ENCODE measurements at regions of chr4 and their contacts with region 1.

Region 1: DNA sequence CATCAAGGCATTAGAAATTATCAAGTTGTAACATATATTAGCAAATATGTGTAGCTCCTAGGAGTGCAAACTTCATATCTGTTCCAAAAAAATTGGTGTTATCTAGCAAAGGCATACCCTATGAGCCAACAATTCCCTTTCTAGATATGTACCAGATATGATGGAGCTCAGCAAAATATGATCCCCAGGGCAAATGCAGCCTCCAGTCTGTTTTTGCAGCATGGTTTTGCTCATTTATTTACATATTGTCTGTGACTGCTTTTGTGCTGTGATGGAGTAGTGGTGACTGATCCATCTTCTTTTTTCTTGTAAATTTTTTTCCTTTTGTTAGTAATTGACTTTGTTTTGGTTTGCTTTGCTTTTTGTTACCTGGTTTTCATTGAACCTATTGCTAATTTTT is 41.0 kb downstream of the CEP135 start:
- DNase-seq: no peak
- ATAC-seq: no peak
- H3K4me3 ChIP-seq: no peak overlapping the region
- H3K27ac ChIP-seq: no peak overlapping the region
- H3K4me1 ChIP-seq: no peaks in the 10 kb centered on the region
- H3K27me3 ChIP-seq: no peaks in the 10 kb centered on the region
- CTCF ChIP-seq: no peak

Region 2: DNA sequence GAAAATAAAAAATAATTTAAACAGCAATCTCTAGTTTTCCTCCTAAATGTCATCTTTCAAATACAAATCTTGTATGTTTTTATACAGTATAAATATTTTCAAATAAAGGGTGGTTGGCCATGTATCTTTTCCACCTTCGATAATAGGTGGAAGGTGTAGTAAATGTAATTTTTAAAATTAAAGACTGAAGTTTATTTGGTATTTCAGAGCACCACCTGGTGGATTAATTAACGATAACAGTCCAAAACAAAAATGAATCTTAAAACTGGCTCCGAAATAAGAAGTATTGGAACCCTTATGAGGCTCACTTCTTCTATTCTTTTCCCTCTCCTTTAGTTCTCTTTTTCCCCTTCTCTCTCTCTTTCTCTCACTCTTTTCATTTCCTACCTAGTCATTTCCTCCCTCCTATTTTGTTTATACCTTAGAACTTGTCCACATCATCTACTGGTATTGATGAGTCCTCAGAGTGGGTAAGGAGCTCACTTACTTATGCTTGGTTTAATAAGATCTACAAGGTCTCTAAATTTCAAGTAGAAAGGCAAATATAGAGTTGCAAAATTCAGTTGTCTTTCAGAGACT is 253.1 kb before region 1 on chr4:
- CTCF ChIA-PET with region 1: no interaction called
- POLR2A ChIA-PET with region 1: no interaction called
- intact Hi-C with region 1: no loop called
- DNase-seq: peak; percentile 64
- ATAC-seq: no peak
- H3K4me3 ChIP-seq: no peak overlapping the region
- H3K27ac ChIP-seq: no peak overlapping the region
- H3K4me1 ChIP-seq: peaks cover 15% of the 10 kb centered on the region
- H3K27me3 ChIP-seq: no peaks in the 10 kb centered on the region
- CTCF ChIP-seq: peak; percentile 77

Region 3: GRCh38 chr4:56007154-56007553 is 17.4 kb after region 1 on chr4:
- CTCF ChIA-PET with region 1: no interaction called
- POLR2A ChIA-PET with region 1: no interaction called
- intact Hi-C with region 1: loop called (anchors 1 kb)
- DNase-seq: no peak
- ATAC-seq: no peak
- H3K4me3 ChIP-seq: no peak overlapping the region
- H3K27ac ChIP-seq: no peak overlapping the region
- H3K4me1 ChIP-seq: no peaks in the 10 kb centered on the region
- H3K27me3 ChIP-seq: no peaks in the 10 kb centered on the region
- CTCF ChIP-seq: no peak

Region 4: DNA sequence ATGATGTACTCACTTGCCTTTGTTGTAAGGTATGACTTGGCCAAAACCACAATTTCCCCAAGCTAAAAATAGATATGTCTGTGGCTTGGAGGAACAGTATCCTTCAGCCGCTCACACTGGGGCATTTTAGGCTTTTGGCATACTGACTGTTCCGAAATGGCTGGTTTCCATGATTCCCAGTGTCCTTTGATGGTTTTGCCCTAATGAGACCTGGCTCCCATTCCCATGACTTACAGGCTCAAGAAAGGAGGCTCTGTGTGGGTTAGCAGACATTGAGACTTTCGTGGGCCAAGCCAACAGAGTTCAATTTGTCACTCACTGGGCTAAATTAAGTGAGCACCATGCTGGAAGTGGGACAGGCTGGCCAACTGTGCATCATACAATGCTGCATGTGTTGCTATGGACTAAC is 109.6 kb after region 1 on chr4:
- CTCF ChIA-PET with region 1: no interaction called
- POLR2A ChIA-PET with region 1: no interaction called
- intact Hi-C with region 1: no loop called
- DNase-seq: peak; percentile 51
- ATAC-seq: peak; percentile 33; the same call in 1 of the 2 replicates
- H3K4me3 ChIP-seq: no peak overlapping the region
- H3K27ac ChIP-seq: no peak overlapping the region
- H3K4me1 ChIP-seq: no peaks in the 10 kb centered on the region
- H3K27me3 ChIP-seq: peaks cover 18% of the 10 kb centered on the region
- CTCF ChIP-seq: no peak